Transverse colon (tissue), 4 donors: ENCODE measurements at regions of chr16 and their contacts with region 1.

Region 1: GRCh38 chr16:35690413-35690812 is 2231.0 kb downstream of the TP53TG3F start:
- DNase-seq: no peak
- H3K4me3 ChIP-seq: no peak overlapping the region
- H3K27ac ChIP-seq: no peak overlapping the region
- H3K4me1 ChIP-seq: no peaks in the 10 kb centered on the region
- H3K27me3 ChIP-seq: no peaks in the 10 kb centered on the region
- CTCF ChIP-seq: no peak
- EP300 ChIP-seq: no peak
- POLR2A ChIP-seq: no peak

Region 2: DNA sequence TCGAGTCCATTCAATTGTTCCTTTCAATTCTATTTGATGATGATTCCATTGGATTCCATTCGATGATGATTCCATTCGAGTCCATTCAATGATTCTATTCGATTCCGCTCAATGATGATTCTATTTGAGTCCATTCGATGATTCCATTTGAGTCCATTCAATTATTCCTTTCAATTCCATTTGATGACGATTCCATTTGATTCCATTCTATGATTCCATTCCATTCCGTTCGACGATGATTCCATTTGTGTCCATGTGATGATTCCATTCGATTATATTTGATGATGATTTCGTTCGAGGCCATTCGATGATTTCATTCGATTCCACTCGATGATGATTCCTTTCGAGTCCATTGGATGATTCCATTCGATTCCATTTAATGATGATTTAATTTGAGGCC is 1024.8 kb before region 1 on chr16:
- in situ Hi-C with region 1: no loop called
- intact Hi-C with region 1: no loop called
- DNase-seq: no peak
- H3K4me3 ChIP-seq: no peak overlapping the region
- H3K27ac ChIP-seq: no peak overlapping the region
- H3K4me1 ChIP-seq: no peaks in the 10 kb centered on the region
- H3K27me3 ChIP-seq: no peaks in the 10 kb centered on the region
- CTCF ChIP-seq: no peak
- EP300 ChIP-seq: no peak
- POLR2A ChIP-seq: no peak

Region 3: DNA sequence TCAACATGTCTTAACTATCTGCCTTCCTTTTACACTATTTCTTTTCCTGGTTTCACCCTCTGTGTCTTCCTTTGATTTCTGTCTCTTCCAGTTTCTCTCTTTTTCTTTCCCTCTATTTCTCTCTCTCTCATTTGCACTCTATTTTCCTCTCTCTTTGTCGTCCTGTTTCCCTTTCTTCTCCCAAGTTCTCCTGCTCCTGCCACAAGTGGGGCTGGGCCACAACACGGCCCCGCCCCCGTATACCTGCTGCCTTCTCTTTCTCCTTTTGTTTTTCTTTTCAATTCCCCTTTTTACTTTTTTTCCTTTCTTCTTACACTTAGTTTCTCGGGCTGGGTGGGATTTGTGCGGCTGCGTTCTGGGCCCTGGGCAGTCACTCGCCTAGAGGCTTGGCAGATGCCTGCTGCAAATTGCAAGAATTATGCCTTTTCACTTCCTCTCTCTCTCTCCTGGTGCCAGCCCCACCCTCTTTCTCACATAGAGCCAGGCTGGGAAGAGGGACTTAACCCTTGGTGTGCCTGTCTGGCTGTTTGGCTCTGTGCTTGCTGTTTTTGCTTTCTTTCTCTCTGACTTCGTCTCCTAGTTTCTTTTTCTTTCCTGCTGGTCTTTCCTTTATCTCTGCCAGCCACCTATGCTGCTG is 91.6 kb before region 1 on chr16:
- in situ Hi-C with region 1: loop called in 1 of 4 experiments (anchors 25 kb)
- intact Hi-C with region 1: no loop called
- DNase-seq: no peak
- H3K4me3 ChIP-seq: no peak overlapping the region
- H3K27ac ChIP-seq: no peak overlapping the region
- H3K4me1 ChIP-seq: no peaks in the 10 kb centered on the region
- H3K27me3 ChIP-seq: no peaks in the 10 kb centered on the region
- CTCF ChIP-seq: no peak
- EP300 ChIP-seq: no peak
- POLR2A ChIP-seq: no peak

Region 4: GRCh38 chr16:35795361-35796029 is 105.1 kb after region 1 on chr16:
- in situ Hi-C with region 1: loop called in 1 of 4 experiments (anchors 25 kb)
- intact Hi-C with region 1: no loop called
- DNase-seq: no peak
- H3K4me3 ChIP-seq: no peak overlapping the region
- H3K27ac ChIP-seq: no peak overlapping the region
- H3K4me1 ChIP-seq: no peaks in the 10 kb centered on the region
- H3K27me3 ChIP-seq: no peaks in the 10 kb centered on the region
- CTCF ChIP-seq: no peak
- EP300 ChIP-seq: no peak
- POLR2A ChIP-seq: no peak